ENCODE measurements at regions of chr9 and their contacts with region 1.

Region 1: GRCh38 chr9:122754825-122755224 is 12.7 kb downstream of the OR1L6 start:
- DNase-seq: no peak
- ATAC-seq: no peak
- H3K4me3 ChIP-seq: no peak overlapping the region
- H3K27ac ChIP-seq: no peak overlapping the region
- H3K4me1 ChIP-seq: no peaks in the 10 kb centered on the region
- H3K27me3 ChIP-seq: no peaks in the 10 kb centered on the region
- CTCF ChIP-seq: no peak

Region 2: GRCh38 chr9:122695696-122696095 is 59.1 kb before region 1 on chr9:
- intact Hi-C with region 1: loop called in 1 of 10 experiments (anchors 10 kb)
- DNase-seq: no peak
- ATAC-seq: no peak
- H3K4me3 ChIP-seq: no peak overlapping the region
- H3K27ac ChIP-seq: no peak overlapping the region
- H3K4me1 ChIP-seq: no peaks in the 10 kb centered on the region
- H3K27me3 ChIP-seq: no peaks in the 10 kb centered on the region
- CTCF ChIP-seq: no peak

Region 3: GRCh38 chr9:122961139-122961538 is 206.3 kb after region 1 on chr9:
- intact Hi-C with region 1: no loop called
- DNase-seq: no peak
- ATAC-seq: no peak
- H3K4me3 ChIP-seq: no peak overlapping the region
- H3K27ac ChIP-seq: no peak overlapping the region
- H3K4me1 ChIP-seq: peaks cover 0 to 13% (median 2%) of the 10 kb centered on the region in 9 donors
- H3K27me3 ChIP-seq: no peaks in the 10 kb centered on the region
- CTCF ChIP-seq: no peak

Region 4: GRCh38 chr9:123420592-123421111 is 665.8 kb after region 1 on chr9:
- intact Hi-C with region 1: loop called in 1 of 10 experiments (anchors 5 kb)
- DNase-seq: no peak
- ATAC-seq: no peak
- H3K4me3 ChIP-seq: no peak overlapping the region
- H3K27ac ChIP-seq: no peak overlapping the region
- H3K4me1 ChIP-seq: no peaks in the 10 kb centered on the region
- H3K27me3 ChIP-seq: no peaks in the 10 kb centered on the region
- CTCF ChIP-seq: no peak